ENCODE measurements at regions of chr12 and their contacts with region 1.

Region 1: DNA sequence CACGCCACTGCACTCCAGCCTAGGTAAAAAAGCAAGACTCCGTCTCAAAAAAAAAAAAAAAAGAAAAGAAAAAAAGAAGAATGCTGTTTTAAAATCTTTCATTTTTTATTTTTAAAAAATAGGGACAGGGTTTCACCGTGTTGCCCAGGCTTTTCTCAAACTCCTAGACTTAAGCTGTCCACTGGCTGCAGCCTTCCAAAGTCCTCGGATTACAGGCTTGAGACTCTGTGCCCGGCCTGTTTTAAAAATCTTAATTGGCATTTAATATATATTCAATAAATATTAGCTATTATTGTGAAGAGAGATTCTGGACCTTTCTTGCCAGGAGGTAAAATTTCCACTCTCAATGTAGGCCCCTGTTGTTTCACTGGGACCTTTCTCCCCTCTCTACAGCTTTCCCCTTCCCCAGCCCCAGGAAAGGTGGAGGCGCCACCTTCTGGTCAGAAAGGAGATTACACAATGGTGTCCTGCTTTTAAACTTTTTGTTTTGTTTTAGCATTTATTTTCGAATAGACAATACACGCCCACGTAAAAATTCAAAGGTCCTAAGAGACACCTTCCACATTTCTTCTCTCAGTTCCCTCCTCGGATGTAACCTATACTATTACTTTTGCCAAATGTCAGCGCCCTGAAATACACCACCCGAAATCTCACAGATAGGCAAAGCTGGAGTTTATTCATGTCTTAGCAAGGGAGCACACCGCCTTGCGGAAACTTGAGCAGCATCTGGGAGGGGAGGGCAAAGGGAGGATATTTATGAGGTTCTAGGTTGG is 23.8 kb upstream of the PHC1 start:
- DNase-seq: peak in 3 of 5 donors; percentile 39 to 45 (median 45)
- ATAC-seq: peak; percentile 48 to 88 (median 68)
- H3K4me3 ChIP-seq: peak overlapping the region in 11 of 12 donors; percentile 13 to 70 (median 52)
- H3K27ac ChIP-seq: peak overlapping the region in 3 of 12 donors; percentile 32 to 55 (median 36)
- H3K4me1 ChIP-seq: peaks cover 0 to 5% (median 0%) of the 10 kb centered on the region in 12 donors
- H3K27me3 ChIP-seq: no peaks in the 10 kb centered on the region
- CTCF ChIP-seq: peak; percentile 79 to 95 (median 89)
- POLR2A ChIP-seq: no peak

Region 2: GRCh38 chr12:8662593-8662992 is 227.9 kb before region 1 on chr12 and contains the start of gene MFAP5:
- intact Hi-C with region 1: loop called in 2 of 10 experiments (anchors 5 to 10 kb)
- DNase-seq: peak in 2 of 5 donors; percentile 21 to 34
- ATAC-seq: peak; percentile 62 to 84 (median 74)
- H3K4me3 ChIP-seq: peak within 1 kb of the TSS in 10 of 12 donors; percentile 12 to 53 (median 30)
- H3K27ac ChIP-seq: peak within 1 kb of the TSS; percentile 11 to 78 (median 62)
- H3K4me1 ChIP-seq: peaks cover 0 to 6% (median 0%) of the 10 kb centered on the region in 12 donors
- H3K27me3 ChIP-seq: no peaks in the 10 kb centered on the region
- CTCF ChIP-seq: no peak
- POLR2A ChIP-seq: peak in 1 of 2 donors; percentile 21
- total RNA-seq, gene MFAP5: 12.4 to 137 (median 33.0) TPM

Region 3: GRCh38 chr12:8672381-8672780 is 218.1 kb before region 1 on chr12:
- intact Hi-C with region 1: loop called in 1 of 10 experiments (anchors 5 kb)
- DNase-seq: no peak
- ATAC-seq: no peak
- H3K4me3 ChIP-seq: no peak overlapping the region
- H3K27ac ChIP-seq: no peak overlapping the region
- H3K4me1 ChIP-seq: peaks cover 0 to 23% (median 0%) of the 10 kb centered on the region in 12 donors
- H3K27me3 ChIP-seq: no peaks in the 10 kb centered on the region
- CTCF ChIP-seq: no peak
- POLR2A ChIP-seq: no peak

Region 4: GRCh38 chr12:8681041-8681902 is 209.2 kb before region 1 on chr12:
- intact Hi-C with region 1: loop called in 9 of 10 experiments (anchors 1 to 10 kb)
- DNase-seq: peak in 2 of 5 donors; percentile 11 to 30
- ATAC-seq: peak; percentile 62 to 91 (median 66)
- H3K4me3 ChIP-seq: peak overlapping the region in 4 of 12 donors; percentile 11 to 25 (median 16)
- H3K27ac ChIP-seq: peak overlapping the region in 11 of 12 donors; percentile 21 to 73 (median 54)
- H3K4me1 ChIP-seq: peaks cover 0 to 20% (median 0%) of the 10 kb centered on the region in 12 donors
- H3K27me3 ChIP-seq: no peaks in the 10 kb centered on the region
- CTCF ChIP-seq: no peak
- POLR2A ChIP-seq: no peak

Region 5: GRCh38 chr12:8780389-8780788 is 110.1 kb before region 1 on chr12:
- intact Hi-C with region 1: loop called in 3 of 10 experiments (anchors 2 to 10 kb)
- DNase-seq: no peak
- ATAC-seq: peak in 1 of 4 donors; percentile 63
- H3K4me3 ChIP-seq: no peak overlapping the region
- H3K27ac ChIP-seq: no peak overlapping the region
- H3K4me1 ChIP-seq: peaks cover 0 to 26% (median 4%) of the 10 kb centered on the region in 12 donors
- H3K27me3 ChIP-seq: no peaks in the 10 kb centered on the region
- CTCF ChIP-seq: peak in 11 of 12 donors; percentile 6 to 50 (median 38)
- POLR2A ChIP-seq: no peak

Measured in heart left ventricle (tissue), 16 donors.